ENCODE measurements at regions of chr1 and their contacts with region 1.

Region 1: GRCh38 chr1:99481391-99481996 is 164.4 kb upstream of the PALMD start:
- DNase-seq: no peak
- CTCF ChIP-seq: peak; percentile 64

Region 2: GRCh38 chr1:98794196-98794886 is 687.2 kb before region 1 on chr1:
- CTCF ChIA-PET with region 1: interaction called, 25 read pairs
- POLR2A ChIA-PET with region 1: no interaction called
- DNase-seq: peak; percentile 33
- CTCF ChIP-seq: peak; percentile 64

Region 3: DNA sequence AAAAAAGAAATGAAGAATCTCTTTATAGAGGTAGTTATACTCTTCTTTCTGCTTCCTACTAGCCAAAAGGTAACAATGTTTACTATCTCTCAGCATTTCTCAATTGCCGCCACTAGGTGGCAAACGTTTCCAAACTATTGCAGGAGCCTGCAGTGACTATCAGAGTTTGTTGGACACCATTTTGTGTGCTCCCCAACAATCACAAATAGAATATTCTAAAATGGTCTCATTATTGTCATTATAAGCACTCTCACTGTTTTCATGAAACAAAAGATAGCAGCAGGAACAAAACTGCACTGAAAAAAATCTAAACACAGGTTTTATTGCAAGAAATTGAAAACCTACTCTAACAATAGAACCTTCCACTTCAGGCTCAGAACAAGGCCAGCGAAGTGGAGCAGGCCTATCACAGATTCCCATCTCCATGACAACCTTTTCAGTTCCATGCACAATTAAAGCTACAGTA is 301.1 kb before region 1 on chr1:
- CTCF ChIA-PET with region 1: interaction called, 37 read pairs
- POLR2A ChIA-PET with region 1: no interaction called
- DNase-seq: peak; percentile 45
- CTCF ChIP-seq: peak; percentile 78

Region 4: DNA sequence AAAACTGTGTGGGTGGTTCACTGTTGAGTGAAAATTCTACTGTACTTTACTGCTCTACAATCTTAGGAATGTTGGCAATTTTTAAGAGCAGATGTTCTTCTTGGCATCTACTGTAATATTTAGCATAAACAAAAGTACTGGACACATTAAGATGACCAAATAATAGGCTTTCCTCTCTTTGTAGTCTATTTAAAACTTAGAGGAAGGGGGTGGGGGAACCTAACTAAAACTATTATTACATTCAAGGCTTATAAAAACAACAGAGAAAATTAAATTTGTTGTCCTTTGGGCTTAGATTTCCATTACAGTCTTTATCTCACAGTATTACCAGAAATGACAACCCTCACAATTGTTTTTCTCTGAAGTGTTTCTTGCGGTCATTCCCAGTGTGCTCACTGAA is 36.0 kb before region 1 on chr1:
- CTCF ChIA-PET with region 1: no interaction called
- POLR2A ChIA-PET with region 1: no interaction called
- DNase-seq: no peak
- CTCF ChIP-seq: no peak

Region 5: DNA sequence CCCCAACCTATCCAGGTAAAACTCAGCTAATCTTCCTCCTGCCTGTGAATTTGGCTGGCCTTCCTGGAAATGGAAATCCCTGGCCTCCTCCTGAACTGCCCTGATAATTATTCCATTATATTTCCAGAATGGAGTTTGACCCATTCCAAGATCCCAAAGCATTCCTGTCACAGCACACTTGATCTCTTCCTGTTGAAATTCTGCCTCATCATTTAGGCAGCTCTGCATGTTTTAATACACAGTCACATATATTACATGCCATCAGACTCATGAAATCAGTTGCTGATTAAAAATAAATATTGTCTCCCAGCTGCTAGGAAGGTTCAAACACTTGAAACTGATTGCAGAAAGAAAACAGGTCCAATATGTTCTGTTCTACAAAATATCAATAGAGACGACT is 16.2 kb after region 1 on chr1:
- CTCF ChIA-PET with region 1: interaction called, 21 read pairs
- POLR2A ChIA-PET with region 1: no interaction called
- DNase-seq: no peak
- CTCF ChIP-seq: no peak

Region 6: GRCh38 chr1:99580451-99580850 is 99.0 kb after region 1 on chr1:
- CTCF ChIA-PET with region 1: no interaction called
- POLR2A ChIA-PET with region 1: no interaction called
- DNase-seq: no peak
- CTCF ChIP-seq: no peak

Measured in GM10248 (cell line).